GM23248 (cell line): ENCODE measurements at regions of chr13 and their contacts with region 1.

Region 1: DNA sequence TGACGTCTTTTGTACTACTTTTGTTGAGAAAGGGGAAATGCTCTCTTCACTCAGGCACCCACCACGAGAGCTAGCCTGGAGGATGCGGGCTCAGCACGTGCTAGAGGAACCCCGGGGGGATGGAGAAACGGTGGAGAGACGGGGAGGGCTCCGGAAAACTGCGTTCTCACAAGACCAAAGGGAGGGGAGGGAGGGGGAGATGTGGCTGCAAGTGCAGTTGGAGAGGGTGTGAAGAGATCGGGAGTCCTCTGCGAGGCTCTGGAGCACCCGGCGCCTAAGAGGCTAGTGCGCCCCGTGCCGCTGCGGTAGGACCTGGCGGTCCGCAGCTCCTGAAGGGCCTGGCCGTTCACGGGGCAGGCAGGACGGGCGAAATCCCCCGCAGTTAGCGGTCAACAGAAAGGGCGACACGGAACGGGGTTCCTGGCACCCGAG is 43.4 kb upstream of the XPO4 start:
- DNase-seq: peak; percentile 35
- H3K4me3 ChIP-seq: peak overlapping the region; percentile 58
- H3K27ac ChIP-seq: no peak overlapping the region
- H3K4me1 ChIP-seq: peaks cover 7% of the 10 kb centered on the region; the same call in 1 of the 2 replicates
- H3K27me3 ChIP-seq: no peaks in the 10 kb centered on the region

Region 2: GRCh38 chr13:21124852-21125251 is 178.9 kb after region 1 on chr13:
- in situ Hi-C with region 1: loop called (anchors 10 kb)
- DNase-seq: peak; percentile 13
- H3K4me3 ChIP-seq: no peak overlapping the region
- H3K27ac ChIP-seq: no peak overlapping the region
- H3K4me1 ChIP-seq: no peaks in the 10 kb centered on the region
- H3K27me3 ChIP-seq: no peaks in the 10 kb centered on the region

Region 3: GRCh38 chr13:21481359-21481758 is 535.4 kb after region 1 on chr13:
- in situ Hi-C with region 1: loop called (anchors 10 kb)
- DNase-seq: peak; percentile 43
- H3K4me3 ChIP-seq: no peak overlapping the region
- H3K27ac ChIP-seq: no peak overlapping the region
- H3K4me1 ChIP-seq: peaks cover 8% of the 10 kb centered on the region; the same call in 1 of the 2 replicates
- H3K27me3 ChIP-seq: no peaks in the 10 kb centered on the region